GM13976 (cell line): ENCODE measurements at regions of chr3 and their contacts with region 1.

Region 1: GRCh38 chr3:193788189-193788991 is 195.4 kb downstream of the OPA1 start:
- DNase-seq: peak; percentile 86
- CTCF ChIP-seq: peak; percentile 67

Region 2: GRCh38 chr3:194134757-194135528 is 346.6 kb after region 1 on chr3:
- in situ Hi-C with region 1: loop called (anchors 25 kb)
- DNase-seq: peak; percentile 84
- CTCF ChIP-seq: no peak